Calu3 (cell line): ENCODE measurements at regions of chr1 and their contacts with region 1.

Region 1: DNA sequence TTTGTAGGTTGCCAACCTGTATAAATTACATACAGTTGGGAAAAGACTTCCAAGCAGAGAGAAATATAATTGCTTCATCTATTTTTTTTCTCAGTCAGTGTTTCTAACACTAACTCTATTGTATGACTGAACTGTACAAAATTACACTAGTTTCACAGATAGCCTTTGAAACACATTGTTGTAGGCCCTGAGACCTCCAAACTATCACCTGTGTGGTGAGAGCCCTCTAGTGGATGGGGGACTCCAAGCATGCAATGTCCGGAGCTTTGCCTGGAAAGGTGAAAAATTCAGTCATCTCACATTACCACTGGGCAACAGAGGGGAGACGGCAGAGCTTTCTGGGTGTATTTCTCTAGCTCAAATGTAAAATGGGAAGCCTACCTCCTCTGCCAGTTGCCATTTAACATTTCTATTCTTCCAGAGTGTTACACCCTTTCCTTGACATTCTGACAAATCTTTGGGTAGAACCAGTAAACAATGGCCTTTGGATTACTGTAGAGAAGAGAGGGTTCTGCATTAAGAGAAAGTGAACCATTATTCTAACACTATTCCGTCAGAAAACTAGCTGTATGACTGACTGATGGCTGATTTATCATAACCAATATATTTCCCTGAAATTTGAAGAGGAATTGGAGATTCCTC is 212.2 kb downstream of the LYPLAL1 start:
- DNase-seq: peak; percentile 84
- H3K4me3 Mint-ChIP-seq: no peak overlapping the region
- H3K27ac Mint-ChIP-seq: no peak overlapping the region
- H3K4me1 Mint-ChIP-seq: peaks cover 16% of the 10 kb centered on the region
- H3K27me3 Mint-ChIP-seq: no peaks in the 10 kb centered on the region
- CTCF ChIP-seq: peak; percentile 77

Region 2: GRCh38 chr1:218330043-218330623 is 1055.8 kb before region 1 on chr1:
- CTCF ChIA-PET with region 1: interaction called, 3 read pairs
- intact Hi-C with region 1: loop called (anchors 2 kb)
- DNase-seq: no peak
- H3K4me3 Mint-ChIP-seq: no peak overlapping the region
- H3K27ac Mint-ChIP-seq: peak overlapping the region; percentile 36
- H3K4me1 Mint-ChIP-seq: no peaks in the 10 kb centered on the region
- H3K27me3 Mint-ChIP-seq: no peaks in the 10 kb centered on the region
- CTCF ChIP-seq: peak; percentile 52

Region 3: GRCh38 chr1:218426343-218426657 is 959.6 kb before region 1 on chr1:
- CTCF ChIA-PET with region 1: no interaction called
- intact Hi-C with region 1: loop called (anchors 10 kb)
- DNase-seq: peak; percentile 78
- H3K4me3 Mint-ChIP-seq: no peak overlapping the region
- H3K27ac Mint-ChIP-seq: peak overlapping the region; percentile 91
- H3K4me1 Mint-ChIP-seq: peaks cover 37% of the 10 kb centered on the region
- H3K27me3 Mint-ChIP-seq: no peaks in the 10 kb centered on the region
- CTCF ChIP-seq: no peak

Region 4: GRCh38 chr1:219088778-219089557 is 296.9 kb before region 1 on chr1:
- CTCF ChIA-PET with region 1: no interaction called
- intact Hi-C with region 1: loop called (anchors 10 kb)
- DNase-seq: peak; percentile 84
- H3K4me3 Mint-ChIP-seq: peak overlapping the region; percentile 33
- H3K27ac Mint-ChIP-seq: peak overlapping the region; percentile 93
- H3K4me1 Mint-ChIP-seq: peaks cover 40% of the 10 kb centered on the region
- H3K27me3 Mint-ChIP-seq: no peaks in the 10 kb centered on the region
- CTCF ChIP-seq: no peak

Region 5: DNA sequence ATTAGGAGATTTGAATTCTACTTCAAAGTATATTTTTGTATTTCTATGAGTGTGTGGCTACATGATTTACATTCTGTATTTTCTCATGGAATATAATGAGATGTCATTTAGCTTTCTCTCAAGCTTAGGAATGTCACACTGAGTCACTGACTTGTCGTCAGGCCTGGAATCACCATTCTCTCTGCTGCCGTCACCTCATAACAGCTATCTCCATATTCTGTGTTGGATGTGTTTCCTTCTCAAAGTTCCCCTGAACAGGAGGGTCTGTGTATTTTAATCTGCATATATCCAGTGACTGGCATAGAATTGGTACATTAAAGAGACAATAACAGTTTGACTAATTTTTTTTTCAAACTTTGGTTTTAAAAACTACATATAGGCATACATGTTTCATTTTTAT is 176.3 kb before region 1 on chr1:
- CTCF ChIA-PET with region 1: interaction called, 3 read pairs
- intact Hi-C with region 1: loop called (anchors 1 kb)
- DNase-seq: no peak
- H3K4me3 Mint-ChIP-seq: no peak overlapping the region
- H3K27ac Mint-ChIP-seq: no peak overlapping the region
- H3K4me1 Mint-ChIP-seq: peaks cover 9% of the 10 kb centered on the region
- H3K27me3 Mint-ChIP-seq: no peaks in the 10 kb centered on the region
- CTCF ChIP-seq: no peak

Region 6: DNA sequence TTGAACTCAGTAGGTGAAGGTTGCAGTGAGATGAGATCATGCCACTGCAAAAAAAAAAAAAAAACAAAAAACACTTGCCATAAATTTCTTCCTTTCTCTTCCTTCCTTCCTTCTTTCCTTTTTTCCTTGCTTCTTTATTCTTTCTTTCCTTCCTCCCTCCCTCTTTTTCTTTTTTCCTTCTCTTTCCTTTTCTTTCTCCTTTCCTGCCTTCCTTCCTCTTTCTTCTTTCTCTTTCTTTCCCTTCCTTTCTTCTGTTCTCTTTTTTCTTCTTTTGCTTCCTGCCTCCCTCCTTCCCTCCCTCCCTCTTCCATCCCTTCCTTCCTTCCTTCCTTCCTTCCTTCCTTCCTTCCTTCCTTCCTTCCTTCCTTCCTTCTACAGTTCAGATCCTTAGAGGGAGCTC is 141.0 kb before region 1 on chr1:
- CTCF ChIA-PET with region 1: interaction called, 13 read pairs
- intact Hi-C with region 1: no loop called
- DNase-seq: no peak
- H3K4me3 Mint-ChIP-seq: no peak overlapping the region
- H3K27ac Mint-ChIP-seq: no peak overlapping the region
- H3K4me1 Mint-ChIP-seq: peaks cover 9% of the 10 kb centered on the region
- H3K27me3 Mint-ChIP-seq: no peaks in the 10 kb centered on the region
- CTCF ChIP-seq: no peak

Region 7: GRCh38 chr1:219304227-219305226 is 81.4 kb before region 1 on chr1:
- CTCF ChIA-PET with region 1: no interaction called
- intact Hi-C with region 1: loop called (anchors 2 kb)
- DNase-seq: peak; percentile 27
- H3K4me3 Mint-ChIP-seq: no peak overlapping the region
- H3K27ac Mint-ChIP-seq: no peak overlapping the region
- H3K4me1 Mint-ChIP-seq: peaks cover 10% of the 10 kb centered on the region
- H3K27me3 Mint-ChIP-seq: no peaks in the 10 kb centered on the region
- CTCF ChIP-seq: no peak